ENCODE measurements at regions of chr9 and their contacts with region 1.

Region 1: DNA sequence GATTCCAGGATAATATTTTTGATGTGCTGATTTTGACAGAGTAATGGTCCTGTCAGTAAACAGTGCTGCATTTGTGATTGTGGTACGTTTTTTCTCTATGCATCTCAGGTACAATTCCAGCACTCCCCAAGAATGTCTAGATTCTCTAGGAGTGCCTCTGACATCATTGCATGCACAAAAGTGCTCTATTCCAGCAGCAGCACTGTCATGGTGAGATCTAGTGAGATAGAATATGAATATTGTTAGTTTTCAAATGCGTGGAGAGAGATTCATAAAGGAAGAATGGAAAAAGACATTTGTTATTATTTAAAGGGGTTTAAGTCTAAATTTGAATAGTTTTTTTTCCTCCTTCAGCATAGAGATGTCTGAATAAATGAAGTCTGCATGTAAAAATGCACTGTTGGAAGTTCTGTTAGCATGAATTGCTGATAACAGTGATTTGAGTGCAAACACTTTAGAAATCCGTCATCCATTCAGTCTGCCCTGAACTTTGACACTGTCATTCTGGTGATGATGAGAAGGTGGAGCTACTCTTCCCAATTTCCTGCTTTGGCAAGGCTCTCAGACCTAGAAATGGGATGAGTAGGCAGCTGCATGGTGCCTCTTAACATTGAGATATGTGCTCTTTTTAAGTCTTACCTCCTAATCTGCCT is 84.6 kb downstream of the GAPVD1 start:
- DNase-seq: no peak
- ATAC-seq: no peak
- H3K4me3 ChIP-seq: no peak overlapping the region
- H3K27ac ChIP-seq: no peak overlapping the region
- H3K4me1 ChIP-seq: no peaks in the 10 kb centered on the region
- H3K27me3 ChIP-seq: no peaks in the 10 kb centered on the region

Region 2: GRCh38 chr9:125241000-125241862 is 105.0 kb before region 1 on chr9 and contains the start of gene HSPA5:
- intact Hi-C with region 1: loop called in 1 of 2 experiments (anchors 5 kb)
- DNase-seq: peak; percentile 100
- ATAC-seq: peak; percentile 99
- H3K4me3 ChIP-seq: peak within 1 kb of the TSS; percentile 54 to 87
- H3K27ac ChIP-seq: peak within 1 kb of the TSS; percentile 85 to 88
- H3K4me1 ChIP-seq: peaks cover 0 to 2% of the 10 kb centered on the region in 2 donors
- H3K27me3 ChIP-seq: no peaks in the 10 kb centered on the region
- total RNA-seq, gene HSPA5: 195 to 260 TPM